PC-9 (cell line): ENCODE measurements at regions of chr11 and their contacts with region 1.

Region 1: GRCh38 chr11:86735462-86736302 is 63.3 kb upstream of the ME3 start:
- DNase-seq: peak; percentile 54 to 92
- H3K4me3 ChIP-seq: no peak overlapping the region
- H3K27ac ChIP-seq: peak overlapping the region; percentile 76
- H3K4me1 ChIP-seq: peaks cover 75% of the 10 kb centered on the region
- H3K27me3 ChIP-seq: no peaks in the 10 kb centered on the region
- CTCF ChIP-seq: no peak

Region 2: GRCh38 chr11:86671682-86672621 is 63.7 kb before region 1 on chr11 and contains the start of gene ME3:
- CTCF ChIA-PET with region 1: interaction called, 10 read pairs
- POLR2A ChIA-PET with region 1: interaction called, 4 read pairs
- intact Hi-C with region 1: no loop called
- DNase-seq: peak; percentile 63 to 74
- H3K4me3 ChIP-seq: peak within 1 kb of the TSS; percentile 82
- H3K27ac ChIP-seq: peak within 1 kb of the TSS; percentile 87
- H3K4me1 ChIP-seq: peaks cover 52% of the 10 kb centered on the region
- H3K27me3 ChIP-seq: no peaks in the 10 kb centered on the region
- CTCF ChIP-seq: no peak
- total RNA-seq, gene ME3: 34.0 and 61.1 TPM in 2 replicates

Region 3: GRCh38 chr11:86990515-86990914 is 254.8 kb after region 1 on chr11:
- CTCF ChIA-PET with region 1: no interaction called
- POLR2A ChIA-PET with region 1: no interaction called
- intact Hi-C with region 1: no loop called
- DNase-seq: peak in 1 of 2 experiments; percentile 46
- H3K4me3 ChIP-seq: no peak overlapping the region
- H3K27ac ChIP-seq: no peak overlapping the region
- H3K4me1 ChIP-seq: peaks cover 16% of the 10 kb centered on the region
- H3K27me3 ChIP-seq: no peaks in the 10 kb centered on the region
- CTCF ChIP-seq: no peak